HCT116 (cell line): ENCODE measurements at regions of chr3 and their contacts with region 1.

Region 1: GRCh38 chr3:42443819-42444436 is 33.5 kb upstream of the LYZL4 start:
- DNase-seq: peak; percentile 68
- ATAC-seq: peak; percentile 100
- H3K4me3 ChIP-seq: no peak overlapping the region
- H3K27ac ChIP-seq: no peak overlapping the region
- H3K4me1 ChIP-seq: peaks cover 0 to 8% of the 10 kb centered on the region in 2 experiments; a peak in 1 of 4 replicates
- H3K27me3 ChIP-seq: peaks cover 5% of the 10 kb centered on the region; the same call in 1 of the 2 replicates
- CTCF ChIP-seq: peak; percentile 95 to 99 (median 98)
- POLR2A ChIP-seq: no peak
- RAD21 ChIP-seq: peak; percentile 99

Region 2: DNA sequence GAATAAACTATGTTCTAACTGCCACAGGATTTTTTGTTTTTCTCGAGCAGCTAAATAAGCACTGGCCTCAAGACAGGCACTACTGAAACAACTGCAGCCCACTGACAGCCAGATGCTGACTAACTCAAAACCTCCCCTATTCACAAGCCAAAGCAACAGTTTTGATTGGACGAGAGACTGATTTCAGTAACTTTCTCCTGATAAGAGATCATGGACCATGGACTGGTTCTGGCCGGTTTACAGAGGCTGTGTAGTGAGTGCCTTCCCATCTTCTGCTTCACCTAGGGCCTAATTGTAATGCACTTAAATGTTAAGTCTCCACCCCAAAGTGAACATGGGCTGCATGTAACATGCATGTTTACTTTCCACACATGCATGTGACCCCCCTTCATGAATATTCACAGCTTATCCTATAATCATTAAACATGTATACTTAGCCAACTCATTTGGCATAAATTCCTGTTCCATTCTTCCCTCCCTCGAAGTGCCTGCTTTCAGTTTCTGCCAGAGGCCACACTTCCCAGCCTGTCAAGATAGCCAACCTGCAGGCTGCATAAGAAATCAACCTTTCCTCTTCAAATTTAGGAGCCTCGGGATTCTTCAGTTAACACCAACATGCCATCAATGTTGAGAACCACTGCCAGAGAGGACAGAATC is 590.3 kb before region 1 on chr3:
- CTCF ChIA-PET with region 1: no interaction called
- POLR2A ChIA-PET with region 1: no interaction called
- RAD21 ChIA-PET with region 1: no interaction called
- intact Hi-C with region 1: no loop called
- DNase-seq: no peak
- ATAC-seq: no peak
- H3K4me3 ChIP-seq: no peak overlapping the region
- H3K27ac ChIP-seq: no peak overlapping the region
- H3K4me1 ChIP-seq: no peaks in the 10 kb centered on the region
- H3K27me3 ChIP-seq: no peaks in the 10 kb centered on the region
- CTCF ChIP-seq: no peak
- POLR2A ChIP-seq: no peak
- RAD21 ChIP-seq: no peak

Region 3: GRCh38 chr3:41975421-41976103 is 468.4 kb before region 1 on chr3:
- CTCF ChIA-PET with region 1: no interaction called
- POLR2A ChIA-PET with region 1: no interaction called
- RAD21 ChIA-PET with region 1: no interaction called
- intact Hi-C with region 1: no loop called
- DNase-seq: no peak
- ATAC-seq: no peak
- H3K4me3 ChIP-seq: no peak overlapping the region
- H3K27ac ChIP-seq: no peak overlapping the region
- H3K4me1 ChIP-seq: no peaks in the 10 kb centered on the region
- H3K27me3 ChIP-seq: no peaks in the 10 kb centered on the region
- CTCF ChIP-seq: no peak
- POLR2A ChIP-seq: no peak
- RAD21 ChIP-seq: no peak

Region 4: DNA sequence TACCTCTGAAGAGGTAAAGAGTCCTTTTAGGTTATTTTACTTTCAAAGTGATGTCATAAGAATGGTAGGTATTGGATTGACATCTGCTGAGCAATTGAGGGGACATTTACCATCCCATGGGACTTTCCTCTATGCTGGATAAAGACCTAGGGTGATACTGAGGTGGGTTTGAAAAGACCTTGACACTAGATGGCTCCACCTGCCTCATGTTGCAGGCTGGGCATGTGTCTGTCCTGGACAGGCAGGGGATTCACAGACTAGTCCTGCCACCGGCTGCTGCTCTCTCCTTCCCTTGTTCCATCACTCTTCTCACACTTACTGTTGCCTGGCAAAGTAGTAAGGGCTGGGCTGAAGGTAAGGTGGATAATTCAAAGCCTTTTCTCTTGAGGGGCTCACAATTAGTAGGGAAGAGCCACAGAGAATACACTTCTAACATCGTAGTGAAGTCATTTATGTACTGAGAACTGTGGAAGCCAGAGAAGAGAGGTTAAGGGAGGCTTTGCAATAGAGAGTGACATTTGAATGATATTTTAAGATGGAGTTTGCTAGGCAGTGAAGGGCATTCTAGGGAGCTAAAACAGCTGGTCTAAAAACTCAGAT is 325.1 kb before region 1 on chr3:
- CTCF ChIA-PET with region 1: interaction called, 7 read pairs
- POLR2A ChIA-PET with region 1: no interaction called
- RAD21 ChIA-PET with region 1: interaction called in 1 of 2 experiments, 3 read pairs
- intact Hi-C with region 1: loop called (anchors 1 kb)
- DNase-seq: peak; percentile 47
- ATAC-seq: peak; percentile 86
- H3K4me3 ChIP-seq: no peak overlapping the region
- H3K27ac ChIP-seq: no peak overlapping the region
- H3K4me1 ChIP-seq: peaks cover 40 to 51% of the 10 kb centered on the region in 2 experiments
- H3K27me3 ChIP-seq: no peaks in the 10 kb centered on the region
- CTCF ChIP-seq: peak; percentile 66 to 79 (median 67); a peak in 5 of 6 replicates
- POLR2A ChIP-seq: no peak
- RAD21 ChIP-seq: peak; percentile 84

Region 5: GRCh38 chr3:42256135-42256819 is 187.7 kb before region 1 on chr3:
- CTCF ChIA-PET with region 1: interaction called, 16 read pairs
- POLR2A ChIA-PET with region 1: no interaction called
- RAD21 ChIA-PET with region 1: interaction called in 1 of 2 experiments, 5 read pairs
- intact Hi-C with region 1: no loop called
- DNase-seq: peak; percentile 77
- ATAC-seq: peak; percentile 80
- H3K4me3 ChIP-seq: peak overlapping the region in 1 of 2 experiments; percentile 6; a peak in 1 of 4 replicates
- H3K27ac ChIP-seq: no peak overlapping the region
- H3K4me1 ChIP-seq: peaks cover 24 to 42% of the 10 kb centered on the region in 2 experiments
- H3K27me3 ChIP-seq: no peaks in the 10 kb centered on the region
- CTCF ChIP-seq: no peak
- POLR2A ChIP-seq: no peak
- RAD21 ChIP-seq: peak; percentile 24; the same call in 1 of the 2 replicates

Region 6: GRCh38 chr3:42547401-42547945 is 103.5 kb after region 1 on chr3:
- CTCF ChIA-PET with region 1: interaction called, 5 read pairs
- POLR2A ChIA-PET with region 1: no interaction called
- RAD21 ChIA-PET with region 1: no interaction called
- intact Hi-C with region 1: loop called (anchors 5 kb)
- DNase-seq: peak; percentile 31
- ATAC-seq: peak; percentile 96
- H3K4me3 ChIP-seq: no peak overlapping the region
- H3K27ac ChIP-seq: no peak overlapping the region
- H3K4me1 ChIP-seq: no peaks in the 10 kb centered on the region
- H3K27me3 ChIP-seq: no peaks in the 10 kb centered on the region
- CTCF ChIP-seq: peak; percentile 69 to 99 (median 98); a peak in 5 of 6 replicates
- POLR2A ChIP-seq: no peak
- RAD21 ChIP-seq: peak; percentile 57